MCF 10A (cell line): ENCODE measurements at regions of chr3 and their contacts with region 1.

Region 1: DNA sequence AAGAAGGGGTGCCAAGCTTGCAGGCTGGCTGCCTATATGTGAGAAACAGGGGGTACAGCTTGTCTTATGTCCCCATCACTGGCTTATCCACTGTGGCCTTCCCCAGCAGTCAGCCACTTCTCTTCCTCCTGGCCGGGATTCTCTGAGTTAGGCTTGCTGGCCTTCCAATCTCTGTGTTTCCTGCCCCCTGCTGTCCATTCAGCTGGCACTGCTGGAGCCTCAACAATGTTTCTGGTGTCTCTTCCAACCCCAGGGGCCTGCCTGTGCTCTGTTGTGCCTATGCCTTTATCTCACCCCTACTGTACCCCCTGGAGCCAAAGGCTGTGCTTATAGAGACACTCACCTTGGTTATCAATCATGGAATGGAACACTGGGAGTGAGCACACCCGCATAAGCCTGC is 36.5 kb downstream of the ANAPC13 start:
- DNase-seq: peak; percentile 67
- H3K4me3 Mint-ChIP-seq: no peak overlapping the region
- H3K27ac Mint-ChIP-seq: no peak overlapping the region
- H3K4me1 Mint-ChIP-seq: peaks cover 37% of the 10 kb centered on the region
- H3K27me3 Mint-ChIP-seq: no peaks in the 10 kb centered on the region
- CTCF ChIP-seq: peak; percentile 47

Region 2: GRCh38 chr3:134437211-134437752 is 12.0 kb before region 1 on chr3:
- CTCF ChIA-PET with region 1: interaction called, 4 read pairs
- POLR2A ChIA-PET with region 1: interaction called, 10 read pairs
- intact Hi-C with region 1: no loop called
- DNase-seq: no peak
- H3K4me3 Mint-ChIP-seq: no peak overlapping the region
- H3K27ac Mint-ChIP-seq: peak overlapping the region; percentile 0
- H3K4me1 Mint-ChIP-seq: peaks cover 23% of the 10 kb centered on the region
- H3K27me3 Mint-ChIP-seq: no peaks in the 10 kb centered on the region
- CTCF ChIP-seq: no peak